ENCODE measurements at regions of chr15 and their contacts with region 1.

Region 1: DNA sequence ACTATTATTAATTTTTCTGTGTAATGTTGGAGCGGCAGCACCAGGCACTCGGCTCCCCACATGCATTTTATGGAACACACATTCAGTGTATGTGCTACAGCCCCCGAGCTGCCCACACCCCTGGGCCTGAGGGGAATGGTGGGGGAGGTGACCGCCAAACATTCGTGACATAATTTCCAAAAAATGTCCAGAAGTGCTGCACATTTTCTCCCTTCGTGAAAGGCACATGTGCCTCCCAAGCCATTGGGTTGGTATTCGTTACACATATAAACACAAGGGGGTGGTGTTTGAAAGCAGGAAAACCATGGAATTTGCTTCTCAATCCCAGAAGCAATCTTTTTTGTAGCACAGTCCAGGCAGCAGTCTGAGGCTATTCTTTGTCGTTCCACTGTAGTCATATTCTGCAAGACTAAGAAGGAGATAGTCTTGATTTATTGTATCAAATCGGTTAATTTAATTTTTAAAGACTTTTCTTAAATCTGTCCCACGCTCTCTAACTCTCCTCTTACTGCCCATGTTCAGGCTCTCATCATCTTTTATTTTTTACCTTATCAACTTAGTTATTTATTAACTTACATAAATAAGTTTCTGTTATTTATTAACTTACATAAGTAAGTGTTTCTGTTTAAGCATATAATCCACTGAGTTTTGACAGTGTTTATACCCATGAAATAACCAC is 39.2 kb upstream of the POLR2M start:
- DNase-seq: no peak
- ATAC-seq: peak; percentile 41 to 85 (median 75)
- H3K4me3 ChIP-seq: peak overlapping the region in 1 of 10 donors; percentile 2
- H3K27ac ChIP-seq: peak overlapping the region in 5 of 10 donors; percentile 10 to 32 (median 15)
- H3K4me1 ChIP-seq: peaks cover 0 to 35% (median 20%) of the 10 kb centered on the region in 9 donors
- H3K27me3 ChIP-seq: no peaks in the 10 kb centered on the region
- CTCF ChIP-seq: peak in 8 of 9 donors; percentile 40 to 70 (median 52)

Region 2: DNA sequence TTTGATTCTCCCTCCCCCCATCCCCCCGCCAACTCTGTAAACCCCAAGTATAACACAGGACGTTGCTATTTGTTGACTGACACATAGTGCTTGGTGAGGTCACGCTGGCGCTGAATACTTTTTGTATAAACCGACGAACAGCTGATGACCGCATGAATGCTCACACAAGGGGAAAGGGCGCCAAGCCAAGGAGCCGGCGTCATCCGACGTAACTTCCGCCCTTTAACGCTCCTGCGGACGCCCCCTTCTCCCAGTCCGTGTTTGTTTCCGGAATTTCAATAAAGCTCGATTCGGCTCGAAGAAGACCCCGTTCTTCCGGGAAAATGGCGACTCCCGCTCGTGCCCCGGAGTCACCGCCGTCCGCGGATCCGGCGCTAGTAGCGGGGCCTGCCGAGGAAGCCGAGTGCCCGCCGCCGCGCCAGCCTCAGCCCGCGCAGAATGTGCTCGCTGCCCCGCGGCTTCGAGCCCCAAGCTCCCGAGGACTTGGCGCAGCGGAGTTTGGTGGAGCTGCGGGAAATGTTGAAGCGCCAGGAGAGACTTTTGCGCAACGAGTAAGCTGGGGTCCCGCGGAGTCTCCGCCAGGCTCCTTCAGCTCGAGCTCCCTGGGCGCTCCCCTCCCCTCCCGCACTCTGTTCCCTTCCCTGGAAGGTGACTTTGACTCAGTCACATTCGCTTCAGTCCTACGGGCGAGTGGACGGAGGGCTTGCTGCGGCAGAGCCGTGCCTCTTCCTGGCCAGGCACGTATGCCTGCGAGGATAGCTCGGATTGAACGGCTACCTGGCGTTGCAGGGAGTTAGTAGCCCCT is 39.3 kb after region 1 on chr15 and contains the start of gene POLR2M:
- intact Hi-C with region 1: loop called in 2 of 10 experiments (anchors 5 kb)
- DNase-seq: peak; percentile 94 to 97
- ATAC-seq: peak; percentile 93 to 97 (median 95)
- H3K4me3 ChIP-seq: peak within 1 kb of the TSS; percentile 65 to 97 (median 86)
- H3K27ac ChIP-seq: peak within 1 kb of the TSS; percentile 90 to 100 (median 98)
- H3K4me1 ChIP-seq: peaks cover 0 to 50% (median 34%) of the 10 kb centered on the region in 9 donors
- H3K27me3 ChIP-seq: no peaks in the 10 kb centered on the region
- CTCF ChIP-seq: no peak
- total RNA-seq, gene POLR2M: 42.1 to 89.2 (median 56.5) TPM

Region 3: GRCh38 chr15:57732526-57733331 is 65.4 kb after region 1 on chr15:
- intact Hi-C with region 1: loop called in 1 of 10 experiments (anchors 2 kb)
- DNase-seq: peak in 1 of 2 donors; percentile 45
- ATAC-seq: peak in 6 of 8 donors; percentile 46 to 74 (median 64)
- H3K4me3 ChIP-seq: no peak overlapping the region
- H3K27ac ChIP-seq: no peak overlapping the region
- H3K4me1 ChIP-seq: peaks cover 0 to 19% (median 6%) of the 10 kb centered on the region in 9 donors
- H3K27me3 ChIP-seq: no peaks in the 10 kb centered on the region
- CTCF ChIP-seq: peak; percentile 68 to 94 (median 87)

Region 4: GRCh38 chr15:57861036-57861638 is 193.8 kb after region 1 on chr15:
- intact Hi-C with region 1: loop called in 6 of 10 experiments (anchors 2 to 10 kb)
- DNase-seq: peak in 1 of 2 donors; percentile 36
- ATAC-seq: peak in 6 of 8 donors; percentile 31 to 57 (median 48)
- H3K4me3 ChIP-seq: no peak overlapping the region
- H3K27ac ChIP-seq: no peak overlapping the region
- H3K4me1 ChIP-seq: peaks cover 0 to 9% (median 6%) of the 10 kb centered on the region in 9 donors
- H3K27me3 ChIP-seq: no peaks in the 10 kb centered on the region
- CTCF ChIP-seq: peak; percentile 76 to 91 (median 85)

Region 5: GRCh38 chr15:57866149-57866736 is 198.9 kb after region 1 on chr15:
- intact Hi-C with region 1: loop called in 6 of 10 experiments (anchors 2 to 10 kb)
- DNase-seq: peak; percentile 46 to 62
- ATAC-seq: peak in 3 of 8 donors; percentile 52 to 55 (median 54)
- H3K4me3 ChIP-seq: no peak overlapping the region
- H3K27ac ChIP-seq: no peak overlapping the region
- H3K4me1 ChIP-seq: no peaks in the 10 kb centered on the region
- H3K27me3 ChIP-seq: peaks cover 0 to 21% (median 3%) of the 10 kb centered on the region in 7 donors
- CTCF ChIP-seq: peak; percentile 67 to 84 (median 79)

Region 6: DNA sequence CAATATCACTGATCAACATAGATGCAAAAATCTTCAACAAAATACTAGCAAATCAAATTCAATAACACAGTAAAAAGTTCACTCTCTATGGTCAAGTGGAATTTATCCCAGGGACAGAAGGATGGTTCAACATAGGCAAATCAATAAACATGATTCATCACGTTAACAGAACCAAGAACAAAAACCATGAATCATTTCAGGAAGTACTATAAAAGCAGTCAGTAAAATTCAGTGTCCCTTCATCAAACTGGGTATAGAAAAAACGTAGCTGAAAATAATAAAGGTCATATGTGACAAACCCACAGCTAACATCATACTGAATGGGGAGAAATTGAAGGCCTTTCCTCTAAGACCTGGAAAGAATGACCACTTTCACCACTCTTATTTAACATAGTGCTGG is 211.3 kb after region 1 on chr15:
- intact Hi-C with region 1: no loop called
- DNase-seq: no peak
- ATAC-seq: no peak
- H3K4me3 ChIP-seq: no peak overlapping the region
- H3K27ac ChIP-seq: no peak overlapping the region
- H3K4me1 ChIP-seq: no peaks in the 10 kb centered on the region
- H3K27me3 ChIP-seq: no peaks in the 10 kb centered on the region
- CTCF ChIP-seq: no peak

Measured in heart right ventricle (tissue), 16 donors.